Activated CD4-positive, alpha-beta T cell treated with anti-CD3 and anti-CD28 coated beads, Interleukin-2, amount 10 ng/mL, durations not matched to agents 24 days and 14 days (primary cell): ENCODE measurements at regions of chr11 and their contacts with region 1.

Region 1: DNA sequence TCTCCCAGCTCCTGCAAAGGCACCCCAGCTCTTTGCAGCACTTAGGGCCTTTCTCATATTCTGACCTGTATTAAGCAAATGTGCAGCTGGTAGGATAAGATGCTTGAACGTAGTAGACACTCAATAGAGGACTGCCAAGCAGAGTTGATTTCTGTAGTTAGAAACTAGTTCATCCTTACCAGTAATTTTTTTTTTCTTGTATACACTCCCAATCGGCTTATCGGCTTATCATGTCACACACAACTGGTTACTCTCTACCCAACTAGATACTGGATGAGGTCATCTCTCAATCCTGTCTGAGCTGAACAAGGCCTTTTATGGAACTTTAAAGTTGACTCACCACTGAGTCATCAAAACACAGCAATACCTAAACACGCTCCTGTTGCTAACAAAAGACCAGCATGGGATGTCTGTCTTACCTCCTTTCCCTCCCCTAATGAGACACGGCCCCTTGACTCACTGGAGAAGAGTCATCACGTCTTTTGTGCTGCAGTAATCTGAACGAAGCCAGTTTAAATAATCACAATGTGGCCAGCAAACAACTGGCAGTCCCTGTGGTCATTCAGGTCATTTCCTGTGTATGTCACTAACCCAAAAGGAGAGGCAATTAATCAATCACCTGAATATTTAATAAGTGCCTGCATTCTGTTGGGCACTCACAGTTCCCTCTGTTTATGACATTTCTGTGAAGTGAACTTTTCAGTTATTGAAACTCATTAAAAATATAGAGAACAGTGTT is 7.5 kb upstream of the WEE1 start:
- DNase-seq: peak; percentile 88
- H3K4me3 Mint-ChIP-seq: peak overlapping the region; percentile 52
- H3K27ac Mint-ChIP-seq: peak overlapping the region; percentile 85
- H3K4me1 Mint-ChIP-seq: peaks cover 20% of the 10 kb centered on the region
- H3K27me3 Mint-ChIP-seq: peaks cover 2% of the 10 kb centered on the region

Region 2: GRCh38 chr11:9428706-9429105 is 137.3 kb before region 1 on chr11:
- intact Hi-C with region 1: no loop called
- DNase-seq: no peak
- H3K4me3 Mint-ChIP-seq: no peak overlapping the region
- H3K27ac Mint-ChIP-seq: no peak overlapping the region
- H3K4me1 Mint-ChIP-seq: no peaks in the 10 kb centered on the region
- H3K27me3 Mint-ChIP-seq: no peaks in the 10 kb centered on the region

Region 3: DNA sequence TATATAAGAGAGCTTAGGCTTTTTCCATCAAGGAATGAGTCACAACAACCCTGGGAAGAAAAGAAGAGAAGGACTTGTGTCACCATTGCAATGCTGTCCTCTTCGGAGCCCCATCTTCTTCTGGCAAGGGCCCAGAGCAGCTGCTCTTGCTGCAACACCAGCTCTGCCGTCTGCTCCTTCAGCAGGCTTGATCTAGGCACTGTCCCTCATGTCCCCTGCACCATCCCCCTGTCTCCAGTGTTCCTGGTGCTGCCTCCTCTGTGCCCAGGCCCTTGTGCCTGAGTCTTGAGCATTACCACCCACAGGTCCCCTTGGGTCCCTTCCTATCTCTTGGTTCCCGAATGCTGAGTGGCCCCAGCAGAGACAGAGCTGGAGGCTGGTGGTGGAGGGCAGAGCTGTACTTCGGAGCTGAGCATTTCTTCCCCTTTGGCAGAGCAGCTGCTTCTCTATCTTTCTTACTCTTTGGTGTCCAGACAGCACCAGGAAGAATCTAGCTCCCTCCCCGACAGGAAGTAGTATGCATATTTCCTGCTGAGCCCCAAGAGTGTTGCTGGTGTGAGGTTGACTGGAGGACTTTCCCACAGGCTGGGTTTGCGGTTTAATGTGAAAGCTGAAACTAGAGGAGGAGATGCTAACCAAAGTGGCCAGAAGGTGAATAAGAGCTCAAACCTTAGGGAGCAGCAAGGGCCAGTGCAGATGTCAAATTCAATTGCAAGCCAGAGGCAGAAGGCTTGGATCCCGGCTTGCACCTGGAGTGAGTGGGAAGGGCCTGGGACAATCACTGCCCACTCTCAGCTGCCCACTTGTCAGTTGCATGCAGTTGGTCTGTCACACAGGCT is 35.3 kb after region 1 on chr11:
- intact Hi-C with region 1: loop called (anchors 1 kb)
- DNase-seq: peak; percentile 92
- H3K4me3 Mint-ChIP-seq: peak overlapping the region; percentile 83
- H3K27ac Mint-ChIP-seq: peak overlapping the region; percentile 88
- H3K4me1 Mint-ChIP-seq: peaks cover 30% of the 10 kb centered on the region
- H3K27me3 Mint-ChIP-seq: peaks cover 7% of the 10 kb centered on the region